Dorsolateral prefrontal cortex (tissue), 120 donors: ENCODE measurements at regions of chr1 and their contacts with region 1.

Region 1: DNA sequence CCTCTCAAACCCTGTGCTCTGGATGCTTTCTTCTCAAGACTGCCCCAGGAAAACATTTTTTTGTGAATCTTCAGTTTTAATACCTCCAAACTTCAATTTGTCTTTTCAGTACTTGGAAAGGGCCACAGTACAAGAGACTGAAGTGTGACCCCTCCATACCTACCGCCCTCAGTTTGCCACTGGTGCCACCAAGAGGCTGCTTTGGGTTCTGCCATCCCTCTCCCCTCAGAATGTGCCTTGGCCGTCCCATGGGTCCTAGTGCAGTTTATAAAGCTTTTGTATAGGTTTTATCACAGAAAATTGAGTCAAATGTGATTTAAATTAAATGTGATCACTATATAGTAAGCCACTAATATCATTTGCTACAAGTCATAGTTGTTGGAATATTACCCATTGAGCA is 60.8 kb upstream of the PGD start:
- DNase-seq: peak; percentile 41 to 79 (median 64)
- H3K4me3 ChIP-seq: no peak overlapping the region
- H3K27ac ChIP-seq: peak overlapping the region in 58 of 59 donors; percentile 14 to 98 (median 92)
- H3K27me3 ChIP-seq: no peaks in the 10 kb centered on the region
- CTCF ChIP-seq: peak; percentile 24 to 89 (median 75)

Region 2: GRCh38 chr1:9942939-9943788 is 394.9 kb before region 1 on chr1 and contains the starts of genes LZIC and NMNAT1:
- intact Hi-C with region 1: loop called in 1 of 2 experiments (anchors 10 kb)
- DNase-seq: peak; percentile 90 to 95 (median 94)
- H3K4me3 ChIP-seq: peak within 1 kb of the TSS; percentile 70 to 99 (median 92)
- H3K27ac ChIP-seq: peak within 1 kb of the TSS; percentile 52 to 96 (median 85)
- H3K27me3 ChIP-seq: no peaks in the 10 kb centered on the region
- CTCF ChIP-seq: peak in 48 of 56 donors; percentile 2 to 68 (median 40)
- total RNA-seq, gene LZIC: 21.5 to 45.4 (median 31.9) TPM
- total RNA-seq, gene NMNAT1: 6.4 to 18.0 (median 10.1) TPM

Region 3: GRCh38 chr1:10209905-10210810 is 127.9 kb before region 1 on chr1 and contains the start of gene KIF1B:
- intact Hi-C with region 1: loop called (anchors 1 kb)
- DNase-seq: peak; percentile 96 to 100 (median 98)
- H3K4me3 ChIP-seq: peak within 1 kb of the TSS; percentile 52 to 100 (median 87)
- H3K27ac ChIP-seq: peak within 1 kb of the TSS; percentile 88 to 100 (median 99)
- H3K27me3 ChIP-seq: no peaks in the 10 kb centered on the region
- CTCF ChIP-seq: peak; percentile 93 to 100 (median 98)
- total RNA-seq, gene KIF1B: 238 to 416 (median 324) TPM

Region 4: DNA sequence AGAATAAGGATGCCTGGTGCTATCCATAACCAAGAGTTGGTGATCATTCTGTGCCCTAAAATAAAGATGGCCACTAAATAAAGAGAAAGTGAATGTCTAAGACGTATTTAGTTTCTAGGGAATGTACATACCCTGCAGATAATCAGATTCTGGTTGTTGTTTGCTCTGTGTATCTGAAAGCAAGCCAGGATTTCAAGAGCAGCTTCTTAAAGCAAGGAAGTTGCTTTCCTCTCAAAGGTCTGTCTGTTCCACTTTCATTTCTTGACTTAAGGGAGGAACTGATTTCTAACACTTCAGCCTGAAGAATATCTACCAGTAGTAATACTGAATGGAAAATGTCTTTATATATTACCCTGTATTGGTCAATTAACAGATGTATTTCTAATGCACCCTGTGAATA is 38.9 kb before region 1 on chr1:
- intact Hi-C with region 1: loop called in 1 of 2 experiments (anchors 5 kb)
- DNase-seq: no peak
- H3K4me3 ChIP-seq: peak overlapping the region in 21 of 59 donors; percentile 0 to 41 (median 19)
- H3K27ac ChIP-seq: peak overlapping the region in 56 of 59 donors; percentile 9 to 96 (median 88)
- H3K27me3 ChIP-seq: no peaks in the 10 kb centered on the region
- CTCF ChIP-seq: no peak

Region 5: GRCh38 chr1:10378081-10378841 is 40.2 kb after region 1 on chr1:
- intact Hi-C with region 1: loop called in 1 of 2 experiments (anchors 5 kb)
- DNase-seq: peak in 5 of 10 donors; percentile 37 to 64 (median 48)
- H3K4me3 ChIP-seq: no peak overlapping the region
- H3K27ac ChIP-seq: peak overlapping the region in 58 of 59 donors; percentile 10 to 90 (median 76)
- H3K27me3 ChIP-seq: no peaks in the 10 kb centered on the region
- CTCF ChIP-seq: no peak